Left colon (tissue), 2 donors: ENCODE measurements at regions of chr1 and their contacts with region 1.

Region 1: DNA sequence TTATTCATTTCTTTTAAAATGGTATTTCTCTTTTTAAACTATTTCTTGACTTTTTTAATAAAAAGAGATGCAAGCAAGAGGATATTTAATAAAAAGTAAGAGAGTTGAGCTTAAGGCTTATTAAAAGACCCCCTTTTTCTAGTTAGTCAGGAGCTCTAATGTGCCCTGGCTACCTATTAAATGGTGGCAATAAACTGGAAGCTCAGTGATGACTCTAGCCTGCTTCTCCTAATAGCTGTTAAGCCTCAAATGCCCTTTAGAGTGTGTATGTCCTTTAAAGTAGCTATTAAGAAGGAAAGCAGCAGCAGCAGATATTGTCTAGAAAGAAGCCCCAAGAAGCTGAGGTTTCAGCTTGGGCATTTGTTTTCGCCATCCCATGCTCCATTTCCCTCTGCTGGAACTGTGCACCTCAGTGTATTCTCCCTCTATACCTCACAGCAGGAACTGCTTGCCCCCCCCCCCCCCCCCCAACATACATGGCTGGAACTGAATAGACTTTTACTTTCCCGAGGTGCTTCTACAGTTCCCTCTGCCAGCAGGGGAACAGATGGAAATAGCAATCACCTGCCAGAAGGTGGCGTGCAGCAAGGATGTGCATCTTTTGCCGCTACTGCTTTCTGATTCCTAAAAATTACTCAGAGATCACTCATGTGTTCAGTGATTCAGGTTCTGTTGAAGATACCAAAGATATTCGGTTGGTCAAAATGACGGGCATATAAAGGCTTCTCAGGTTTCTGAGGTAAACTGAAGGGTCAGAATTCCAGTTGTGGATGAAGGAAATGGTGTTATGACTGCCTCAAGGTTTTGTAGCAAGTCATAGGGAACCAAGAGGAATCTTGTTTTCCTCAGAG is 2.5 kb downstream of the RGS4 start:
- DNase-seq: peak in 1 of 2 donors; percentile 49
- ATAC-seq: peak; percentile 53

Region 2: GRCh38 chr1:162905174-162906158 is 166.2 kb before region 1 on chr1:
- intact Hi-C with region 1: no loop called
- DNase-seq: no peak
- ATAC-seq: no peak

Region 3: GRCh38 chr1:163120372-163120771 is 48.7 kb after region 1 on chr1:
- intact Hi-C with region 1: no loop called
- DNase-seq: no peak
- ATAC-seq: no peak

Region 4: GRCh38 chr1:163174524-163175437 is 103.2 kb after region 1 on chr1:
- intact Hi-C with region 1: loop called in 1 of 2 experiments (anchors 10 kb)
- DNase-seq: peak; percentile 48 to 70
- ATAC-seq: peak; percentile 39

Region 5: GRCh38 chr1:163315773-163316374 is 244.2 kb after region 1 on chr1:
- intact Hi-C with region 1: loop called in 1 of 2 experiments (anchors 5 kb)
- DNase-seq: peak; percentile 27 to 29
- ATAC-seq: no peak